ENCODE measurements at regions of chr9 and their contacts with region 1.

Region 1: GRCh38 chr9:76403352-76403751 is 9.1 kb upstream of the RFK start:
- DNase-seq: peak; percentile 80
- H3K4me3 Mint-ChIP-seq: peak overlapping the region; percentile 66
- H3K27ac Mint-ChIP-seq: peak overlapping the region; percentile 71
- H3K4me1 Mint-ChIP-seq: peaks cover 29% of the 10 kb centered on the region
- H3K27me3 Mint-ChIP-seq: peaks cover 2% of the 10 kb centered on the region

Region 2: DNA sequence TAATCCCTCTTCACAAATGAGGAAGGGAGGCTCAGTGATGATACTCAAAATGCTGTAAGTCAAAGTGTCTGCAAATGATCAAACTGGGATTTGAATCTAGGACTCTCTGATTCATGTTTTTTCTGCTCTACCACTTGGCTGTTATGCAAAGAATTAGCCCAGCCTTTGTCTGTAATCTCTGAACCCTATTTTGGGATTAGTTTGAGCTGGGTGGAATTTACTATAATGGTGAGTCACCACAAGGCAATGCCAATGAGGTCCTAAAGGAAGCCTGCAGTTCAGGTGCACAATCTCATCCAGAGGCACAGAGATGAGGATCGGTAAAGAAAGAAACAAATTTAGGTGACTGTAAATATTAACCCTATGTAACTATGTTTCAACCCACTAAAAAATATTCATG is 38.3 kb before region 1 on chr9:
- intact Hi-C with region 1: no loop called
- DNase-seq: no peak
- H3K4me3 Mint-ChIP-seq: no peak overlapping the region
- H3K27ac Mint-ChIP-seq: no peak overlapping the region
- H3K4me1 Mint-ChIP-seq: no peaks in the 10 kb centered on the region
- H3K27me3 Mint-ChIP-seq: peaks cover 3% of the 10 kb centered on the region

Region 3: GRCh38 chr9:76423216-76424177 is 20.1 kb after region 1 on chr9:
- intact Hi-C with region 1: loop called (anchors 1 kb)
- DNase-seq: peak; percentile 64
- H3K4me3 Mint-ChIP-seq: peak overlapping the region; percentile 59
- H3K27ac Mint-ChIP-seq: peak overlapping the region; percentile 72
- H3K4me1 Mint-ChIP-seq: peaks cover 17% of the 10 kb centered on the region
- H3K27me3 Mint-ChIP-seq: no peaks in the 10 kb centered on the region

Region 4: GRCh38 chr9:76562511-76562911 is 159.2 kb after region 1 on chr9:
- intact Hi-C with region 1: loop called (anchors 5 kb)
- DNase-seq: no peak
- H3K4me3 Mint-ChIP-seq: no peak overlapping the region
- H3K27ac Mint-ChIP-seq: peak overlapping the region; percentile 29
- H3K4me1 Mint-ChIP-seq: peaks cover 6% of the 10 kb centered on the region
- H3K27me3 Mint-ChIP-seq: peaks cover 2% of the 10 kb centered on the region

Region 5: DNA sequence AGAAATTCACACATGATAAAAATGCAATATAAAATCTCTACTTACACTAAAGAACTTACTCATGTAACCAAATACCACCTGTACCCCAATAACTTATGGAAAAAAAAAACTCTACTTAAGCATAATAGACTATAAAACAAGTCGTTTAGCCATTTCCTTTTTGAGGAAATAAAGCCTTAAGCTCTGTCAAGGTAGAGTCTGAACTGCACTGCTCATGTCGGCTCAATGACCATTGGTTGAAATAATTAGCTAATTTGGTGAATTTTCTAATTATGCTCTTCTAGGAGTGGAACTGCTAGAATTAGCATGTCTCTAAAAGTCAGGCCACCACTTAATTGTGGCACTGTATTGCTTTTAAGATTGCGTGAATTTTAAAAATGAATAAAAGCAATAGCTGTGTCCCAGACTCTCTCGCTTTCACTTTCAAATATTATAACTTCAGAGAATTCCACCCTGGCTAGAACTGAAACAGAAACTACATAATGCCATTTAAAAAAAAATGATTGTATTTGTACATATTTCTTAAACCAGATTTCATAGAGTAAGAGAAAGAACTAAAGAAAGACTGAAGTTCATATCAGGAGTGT is 247.9 kb after region 1 on chr9:
- intact Hi-C with region 1: loop called (anchors 1 kb)
- DNase-seq: no peak
- H3K4me3 Mint-ChIP-seq: peak overlapping the region; percentile 65
- H3K27ac Mint-ChIP-seq: no peak overlapping the region
- H3K4me1 Mint-ChIP-seq: peaks cover 36% of the 10 kb centered on the region
- H3K27me3 Mint-ChIP-seq: peaks cover 2% of the 10 kb centered on the region

Region 6: GRCh38 chr9:76658535-76659231 is 255.3 kb after region 1 on chr9:
- intact Hi-C with region 1: loop called (anchors 2 kb)
- DNase-seq: peak; percentile 73
- H3K4me3 Mint-ChIP-seq: no peak overlapping the region
- H3K27ac Mint-ChIP-seq: no peak overlapping the region
- H3K4me1 Mint-ChIP-seq: peaks cover 27% of the 10 kb centered on the region
- H3K27me3 Mint-ChIP-seq: peaks cover 8% of the 10 kb centered on the region

Region 7: GRCh38 chr9:76704593-76705204 is 301.3 kb after region 1 on chr9:
- intact Hi-C with region 1: loop called (anchors 1 kb)
- DNase-seq: peak; percentile 71
- H3K4me3 Mint-ChIP-seq: no peak overlapping the region
- H3K27ac Mint-ChIP-seq: no peak overlapping the region
- H3K4me1 Mint-ChIP-seq: peaks cover 5% of the 10 kb centered on the region
- H3K27me3 Mint-ChIP-seq: peaks cover 32% of the 10 kb centered on the region

Measured in activated CD4-positive, alpha-beta T cell treated with anti-CD3 and anti-CD28 coated beads, Interleukin-2, amount 10 ng/mL, durations not matched to agents 24 days and 14 days (primary cell).